ENCODE measurements at regions of chr2 and their contacts with region 1.

Region 1: GRCh38 chr2:230658877-230659652 is 53.6 kb upstream of the CAB39 start:
- DNase-seq: peak in 5 of 9 donors; percentile 17 to 69 (median 28)
- ATAC-seq: peak; percentile 47
- H3K4me3 ChIP-seq: no peak overlapping the region
- H3K4me3 Mint-ChIP-seq: peak overlapping the region; percentile 42 to 92 (median 74)
- H3K27ac ChIP-seq: peak overlapping the region; percentile 48
- H3K27ac Mint-ChIP-seq: peak overlapping the region; percentile 63 to 98 (median 84)
- H3K4me1 ChIP-seq: peaks cover 62 to 64% of the 10 kb centered on the region in 2 donors
- H3K4me1 Mint-ChIP-seq: peaks cover 62 to 88% (median 87%) of the 10 kb centered on the region in 7 donors
- H3K27me3 ChIP-seq: no peaks in the 10 kb centered on the region
- H3K27me3 Mint-ChIP-seq: no peaks in the 10 kb centered on the region

Region 2: DNA sequence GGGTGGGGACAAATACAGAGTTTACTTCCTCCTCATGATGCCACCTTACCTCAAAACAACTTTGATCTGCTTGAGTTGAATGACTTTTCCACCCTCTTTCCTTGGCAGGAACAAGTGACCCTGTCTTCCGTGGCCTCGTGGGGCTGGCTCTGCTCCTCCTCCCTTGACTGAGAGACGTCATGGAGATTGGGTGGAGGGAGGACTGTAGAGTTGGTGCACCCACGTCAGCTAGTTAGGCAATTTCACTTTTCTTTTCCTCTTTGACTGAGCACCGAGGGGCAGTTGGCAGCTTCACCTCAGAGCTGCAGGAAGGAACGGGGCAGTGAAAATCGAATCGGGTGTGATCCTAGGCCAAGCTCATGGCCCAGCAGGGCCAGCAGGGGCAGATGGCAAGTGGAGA is 433.6 kb before region 1 on chr2 and contains the start of gene SP140:
- CTCF ChIA-PET with region 1: no interaction called
- POLR2A ChIA-PET with region 1: no interaction called
- intact Hi-C with region 1: loop called in 1 of 2 experiments (anchors 5 kb)
- DNase-seq: peak; percentile 34 to 91 (median 77)
- ATAC-seq: peak; percentile 97
- H3K4me3 ChIP-seq: peak within 1 kb of the TSS; percentile 70
- H3K4me3 Mint-ChIP-seq: peak within 1 kb of the TSS; percentile 82 to 94 (median 87)
- H3K27ac ChIP-seq: peak within 1 kb of the TSS; percentile 79
- H3K27ac Mint-ChIP-seq: peak within 1 kb of the TSS; percentile 95 to 100 (median 98)
- H3K4me1 ChIP-seq: peaks cover 21 to 39% of the 10 kb centered on the region in 2 donors
- H3K4me1 Mint-ChIP-seq: peaks cover 28 to 79% (median 65%) of the 10 kb centered on the region in 7 donors
- H3K27me3 ChIP-seq: no peaks in the 10 kb centered on the region
- H3K27me3 Mint-ChIP-seq: no peaks in the 10 kb centered on the region
- total RNA-seq, gene SP140: 34.5 to 120 (median 45.2) TPM

Region 3: GRCh38 chr2:230643576-230644291 is 15.3 kb before region 1 on chr2:
- CTCF ChIA-PET with region 1: interaction called, 3 read pairs
- POLR2A ChIA-PET with region 1: interaction called, 10 read pairs
- intact Hi-C with region 1: loop called (anchors 1 kb)
- DNase-seq: peak in 8 of 9 donors; percentile 42 to 72 (median 62)
- ATAC-seq: peak; percentile 93
- H3K4me3 ChIP-seq: peak overlapping the region; percentile 31
- H3K4me3 Mint-ChIP-seq: peak overlapping the region; percentile 23 to 84 (median 72)
- H3K27ac ChIP-seq: peak overlapping the region; percentile 68
- H3K27ac Mint-ChIP-seq: peak overlapping the region; percentile 87 to 98 (median 94)
- H3K4me1 ChIP-seq: peaks cover 20 to 24% of the 10 kb centered on the region in 2 donors
- H3K4me1 Mint-ChIP-seq: peaks cover 14 to 36% (median 24%) of the 10 kb centered on the region in 7 donors
- H3K27me3 ChIP-seq: no peaks in the 10 kb centered on the region
- H3K27me3 Mint-ChIP-seq: no peaks in the 10 kb centered on the region

Region 4: GRCh38 chr2:230677201-230677956 is 18.3 kb after region 1 on chr2:
- CTCF ChIA-PET with region 1: interaction called, 3 read pairs
- POLR2A ChIA-PET with region 1: interaction called, 4 read pairs
- intact Hi-C with region 1: loop called in 1 of 2 experiments (anchors 1 kb)
- DNase-seq: no peak
- ATAC-seq: no peak
- H3K4me3 ChIP-seq: no peak overlapping the region
- H3K4me3 Mint-ChIP-seq: peak overlapping the region in 2 of 10 donors; percentile 21 to 47
- H3K27ac ChIP-seq: no peak overlapping the region
- H3K27ac Mint-ChIP-seq: peak overlapping the region in 3 of 9 donors; percentile 43 to 88 (median 76)
- H3K4me1 ChIP-seq: no peaks in the 10 kb centered on the region
- H3K4me1 Mint-ChIP-seq: peaks cover 4 to 62% (median 23%) of the 10 kb centered on the region in 7 donors
- H3K27me3 ChIP-seq: no peaks in the 10 kb centered on the region
- H3K27me3 Mint-ChIP-seq: no peaks in the 10 kb centered on the region

Region 5: GRCh38 chr2:230691005-230691647 is 32.1 kb after region 1 on chr2:
- CTCF ChIA-PET with region 1: no interaction called
- POLR2A ChIA-PET with region 1: no interaction called
- intact Hi-C with region 1: no loop called
- DNase-seq: no peak
- ATAC-seq: no peak
- H3K4me3 ChIP-seq: no peak overlapping the region
- H3K4me3 Mint-ChIP-seq: no peak overlapping the region
- H3K27ac ChIP-seq: no peak overlapping the region
- H3K27ac Mint-ChIP-seq: peak overlapping the region in 1 of 9 donors; percentile 60
- H3K4me1 ChIP-seq: peaks cover 0 to 6% of the 10 kb centered on the region in 2 donors
- H3K4me1 Mint-ChIP-seq: peaks cover 6 to 26% (median 9%) of the 10 kb centered on the region in 7 donors
- H3K27me3 ChIP-seq: no peaks in the 10 kb centered on the region
- H3K27me3 Mint-ChIP-seq: peaks cover 0 to 6% (median 0%) of the 10 kb centered on the region in 5 donors

Region 6: GRCh38 chr2:230793572-230794359 is 134.7 kb after region 1 on chr2:
- CTCF ChIA-PET with region 1: interaction called, 4 read pairs
- POLR2A ChIA-PET with region 1: no interaction called
- intact Hi-C with region 1: loop called in 1 of 2 experiments (anchors 1 kb)
- DNase-seq: peak in 8 of 9 donors; percentile 33 to 70 (median 49)
- ATAC-seq: peak; percentile 95
- H3K4me3 ChIP-seq: peak overlapping the region; percentile 3
- H3K4me3 Mint-ChIP-seq: peak overlapping the region; percentile 22 to 82 (median 64)
- H3K27ac ChIP-seq: peak overlapping the region; percentile 39
- H3K27ac Mint-ChIP-seq: peak overlapping the region in 8 of 9 donors; percentile 82 to 94 (median 90)
- H3K4me1 ChIP-seq: peaks cover 34 to 47% of the 10 kb centered on the region in 2 donors
- H3K4me1 Mint-ChIP-seq: peaks cover 20 to 65% (median 55%) of the 10 kb centered on the region in 7 donors
- H3K27me3 ChIP-seq: no peaks in the 10 kb centered on the region
- H3K27me3 Mint-ChIP-seq: no peaks in the 10 kb centered on the region

Measured in naive thymus-derived CD4-positive, alpha-beta T cell (primary cell).